Psoas muscle (tissue), 8 donors: ENCODE measurements at regions of chr15 and their contacts with region 1.

Region 1: DNA sequence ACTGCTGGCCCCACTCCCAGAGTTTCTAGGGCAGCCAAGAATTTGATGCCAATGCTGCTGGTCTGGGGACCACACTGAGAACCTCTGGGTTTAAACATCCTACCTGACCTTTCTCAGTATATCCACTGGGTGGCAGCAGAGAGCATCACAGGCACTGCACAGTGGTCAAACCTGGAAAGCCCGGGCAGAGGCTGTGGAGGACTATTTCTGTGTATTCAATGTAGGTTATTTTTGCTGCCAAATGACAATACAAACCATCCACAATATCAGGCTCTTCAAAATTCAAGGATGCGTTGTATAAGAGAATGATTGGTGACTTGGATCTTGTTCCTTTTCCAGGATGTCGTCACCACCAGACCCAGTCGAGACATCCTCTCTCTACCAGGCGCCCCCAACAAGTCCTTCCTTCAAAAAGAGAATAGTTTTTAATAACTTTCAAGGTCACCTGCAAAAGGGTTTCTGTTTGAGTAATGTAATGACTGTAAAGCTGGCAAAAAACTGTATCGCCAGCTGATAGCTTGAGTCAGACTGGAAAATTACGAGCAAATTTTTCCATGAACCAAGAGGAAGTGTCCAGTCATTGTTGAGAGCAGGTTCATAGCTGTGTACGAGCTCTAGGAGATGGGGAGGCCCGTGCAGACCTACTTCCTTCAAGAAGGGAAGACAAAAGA is 30.5 kb upstream of the MYZAP start:
- DNase-seq: peak; percentile 54 to 73
- ATAC-seq: peak; percentile 94 to 99 (median 96)
- H3K4me3 ChIP-seq: no peak overlapping the region
- H3K27ac ChIP-seq: no peak overlapping the region
- H3K4me1 ChIP-seq: no peaks in the 10 kb centered on the region
- H3K27me3 ChIP-seq: no peaks in the 10 kb centered on the region
- CTCF ChIP-seq: peak; percentile 94

Region 2: DNA sequence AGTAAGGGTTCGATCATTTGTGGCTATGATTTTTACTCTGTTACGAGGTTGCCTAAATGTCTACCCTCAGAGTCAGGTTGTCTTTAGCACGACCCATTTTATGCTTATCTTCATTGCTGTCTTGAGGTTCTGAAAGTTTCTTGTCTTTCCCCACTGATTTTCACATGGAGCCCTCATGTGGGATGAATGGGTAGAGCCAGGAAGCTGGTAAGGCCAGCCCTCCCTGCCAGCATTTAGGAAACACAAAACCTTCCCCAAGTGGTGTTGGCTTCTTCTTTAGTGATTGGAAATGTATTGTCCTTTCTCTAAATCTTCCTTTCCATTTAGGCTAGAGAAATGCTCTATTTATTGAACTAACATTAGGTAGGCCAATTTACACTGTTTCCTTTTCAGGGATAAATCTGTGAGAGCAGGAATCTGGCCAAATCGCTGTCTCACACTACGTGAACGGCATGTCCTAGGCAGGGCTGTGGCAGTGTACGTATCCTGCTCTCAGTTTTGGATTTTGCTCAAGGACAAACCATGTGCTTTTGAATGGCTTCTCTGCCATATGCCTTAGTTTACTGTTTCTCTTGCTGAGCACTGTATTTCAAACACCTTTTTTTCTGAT is 74.2 kb after region 1 on chr15:
- intact Hi-C with region 1: loop called in 1 of 2 experiments (anchors 10 kb)
- DNase-seq: peak in 1 of 2 donors; percentile 71
- ATAC-seq: peak; percentile 71 to 91 (median 86)
- H3K4me3 ChIP-seq: no peak overlapping the region
- H3K27ac ChIP-seq: peak overlapping the region; percentile 72
- H3K4me1 ChIP-seq: peaks cover 15% of the 10 kb centered on the region
- H3K27me3 ChIP-seq: no peaks in the 10 kb centered on the region
- CTCF ChIP-seq: no peak

Region 3: DNA sequence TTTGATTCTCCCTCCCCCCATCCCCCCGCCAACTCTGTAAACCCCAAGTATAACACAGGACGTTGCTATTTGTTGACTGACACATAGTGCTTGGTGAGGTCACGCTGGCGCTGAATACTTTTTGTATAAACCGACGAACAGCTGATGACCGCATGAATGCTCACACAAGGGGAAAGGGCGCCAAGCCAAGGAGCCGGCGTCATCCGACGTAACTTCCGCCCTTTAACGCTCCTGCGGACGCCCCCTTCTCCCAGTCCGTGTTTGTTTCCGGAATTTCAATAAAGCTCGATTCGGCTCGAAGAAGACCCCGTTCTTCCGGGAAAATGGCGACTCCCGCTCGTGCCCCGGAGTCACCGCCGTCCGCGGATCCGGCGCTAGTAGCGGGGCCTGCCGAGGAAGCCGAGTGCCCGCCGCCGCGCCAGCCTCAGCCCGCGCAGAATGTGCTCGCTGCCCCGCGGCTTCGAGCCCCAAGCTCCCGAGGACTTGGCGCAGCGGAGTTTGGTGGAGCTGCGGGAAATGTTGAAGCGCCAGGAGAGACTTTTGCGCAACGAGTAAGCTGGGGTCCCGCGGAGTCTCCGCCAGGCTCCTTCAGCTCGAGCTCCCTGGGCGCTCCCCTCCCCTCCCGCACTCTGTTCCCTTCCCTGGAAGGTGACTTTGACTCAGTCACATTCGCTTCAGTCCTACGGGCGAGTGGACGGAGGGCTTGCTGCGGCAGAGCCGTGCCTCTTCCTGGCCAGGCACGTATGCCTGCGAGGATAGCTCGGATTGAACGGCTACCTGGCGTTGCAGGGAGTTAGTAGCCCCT is 145.4 kb after region 1 on chr15 and contains the start of gene POLR2M:
- intact Hi-C with region 1: loop called in 1 of 2 experiments (anchors 2 kb)
- DNase-seq: peak; percentile 95 to 98
- ATAC-seq: peak; percentile 95 to 96 (median 96)
- H3K4me3 ChIP-seq: peak within 1 kb of the TSS; percentile 93
- H3K27ac ChIP-seq: peak within 1 kb of the TSS; percentile 96
- H3K4me1 ChIP-seq: peaks cover 31% of the 10 kb centered on the region
- H3K27me3 ChIP-seq: no peaks in the 10 kb centered on the region
- CTCF ChIP-seq: no peak
- total RNA-seq, gene POLR2M: 81.2 to 114 (median 94.2) TPM

Region 4: DNA sequence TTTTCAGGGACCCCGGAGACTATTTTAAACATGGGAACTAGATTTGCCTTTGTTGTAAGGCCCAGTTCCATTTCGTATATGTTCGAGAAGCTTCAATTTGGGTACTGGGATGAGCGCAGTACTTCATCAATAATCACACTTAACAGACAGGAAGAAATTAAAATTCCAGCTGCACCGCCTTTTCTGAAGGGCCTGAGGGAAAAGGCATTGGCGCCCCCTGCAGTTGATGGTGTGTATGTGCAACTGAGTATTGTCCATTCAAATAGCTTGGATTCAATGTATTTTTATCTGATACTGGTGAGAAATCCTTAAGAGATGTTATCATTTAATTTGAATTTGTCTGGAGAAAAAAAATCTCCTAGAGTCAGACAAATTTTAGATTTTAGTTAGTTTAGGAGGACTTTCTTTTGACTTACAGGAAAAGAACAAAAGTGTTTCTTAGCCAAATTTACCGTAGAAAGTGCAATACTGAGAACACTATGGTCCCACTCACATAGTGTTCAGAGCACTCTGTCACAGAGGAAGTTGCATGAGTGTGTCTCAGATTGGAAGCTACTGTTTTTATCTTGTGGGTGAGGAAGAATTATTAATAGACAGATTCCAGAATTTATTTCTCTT is 509.7 kb after region 1 on chr15:
- intact Hi-C with region 1: loop called in 1 of 2 experiments (anchors 5 kb)
- DNase-seq: peak; percentile 34 to 68
- ATAC-seq: no peak
- H3K4me3 ChIP-seq: no peak overlapping the region
- H3K27ac ChIP-seq: no peak overlapping the region
- H3K4me1 ChIP-seq: no peaks in the 10 kb centered on the region
- H3K27me3 ChIP-seq: peaks cover 0 to 26% (median 2%) of the 10 kb centered on the region in 3 donors
- CTCF ChIP-seq: peak; percentile 71